Psoas muscle (tissue), 8 donors: ENCODE measurements at regions of chr3 and their contacts with region 1.

Region 1: DNA sequence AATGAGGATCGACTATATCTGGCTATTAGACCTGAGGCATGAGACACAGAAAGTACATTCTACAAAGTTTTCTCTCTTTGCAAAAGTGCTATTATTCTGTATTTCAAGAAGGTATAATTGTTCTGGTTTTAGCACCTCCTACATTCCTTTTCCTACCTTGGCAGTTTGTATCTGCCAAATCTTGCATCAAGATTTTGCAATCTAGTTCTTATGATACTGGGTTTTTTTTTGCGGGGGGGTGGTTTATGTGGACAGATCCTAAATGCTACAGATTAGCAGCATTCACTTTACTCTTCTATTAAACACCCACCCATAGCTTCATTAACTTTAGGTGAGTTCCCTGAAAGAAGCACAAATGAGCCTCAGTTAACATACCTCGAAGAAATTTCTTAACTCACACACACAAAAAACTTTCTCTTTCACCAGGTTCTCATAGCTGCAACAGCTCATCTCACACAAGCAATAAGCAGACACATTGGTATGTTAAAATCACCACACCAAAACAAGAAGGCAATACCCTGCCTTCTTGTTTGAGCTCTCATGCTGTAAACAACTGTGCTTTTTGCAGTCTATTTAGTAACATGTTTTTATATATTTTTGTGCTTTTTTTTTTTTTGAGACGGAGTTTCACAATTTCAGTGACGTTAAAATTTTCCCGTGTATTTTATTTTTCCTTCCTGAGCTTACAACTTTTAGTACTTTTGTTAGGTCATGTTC is 73.0 kb upstream of the VGLL4 start:
- DNase-seq: no peak
- ATAC-seq: no peak
- H3K4me3 ChIP-seq: no peak overlapping the region
- H3K27ac ChIP-seq: peak overlapping the region; percentile 86
- H3K4me1 ChIP-seq: peaks cover 11% of the 10 kb centered on the region
- H3K27me3 ChIP-seq: no peaks in the 10 kb centered on the region
- CTCF ChIP-seq: no peak

Region 2: DNA sequence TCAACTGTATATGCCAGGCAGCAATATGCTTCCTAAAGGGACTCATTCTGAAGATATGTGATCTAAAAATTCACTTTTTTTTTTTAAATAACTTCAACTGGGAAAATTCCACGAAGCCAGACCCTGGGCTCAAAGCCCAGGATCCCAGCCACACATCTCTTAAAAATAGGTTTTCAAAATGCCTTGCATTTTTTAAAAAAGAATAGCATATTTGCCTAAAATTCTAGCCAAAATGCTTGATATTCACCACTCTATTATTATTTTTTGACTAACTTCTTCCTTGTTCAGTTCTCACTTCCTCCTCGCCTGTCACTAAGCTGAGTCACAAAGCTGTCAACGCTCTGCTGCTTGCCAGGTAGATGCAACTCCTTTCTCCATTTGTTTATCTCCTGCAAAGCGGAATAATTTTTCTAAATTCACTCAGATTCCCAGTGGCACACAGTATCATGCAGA is 45.1 kb before region 1 on chr3:
- intact Hi-C with region 1: loop called in 1 of 2 experiments (anchors 5 kb)
- DNase-seq: peak in 1 of 2 donors; percentile 26
- ATAC-seq: peak in 1 of 4 donors; percentile 76
- H3K4me3 ChIP-seq: no peak overlapping the region
- H3K27ac ChIP-seq: no peak overlapping the region
- H3K4me1 ChIP-seq: peaks cover 21% of the 10 kb centered on the region
- H3K27me3 ChIP-seq: no peaks in the 10 kb centered on the region
- CTCF ChIP-seq: no peak

Region 3: DNA sequence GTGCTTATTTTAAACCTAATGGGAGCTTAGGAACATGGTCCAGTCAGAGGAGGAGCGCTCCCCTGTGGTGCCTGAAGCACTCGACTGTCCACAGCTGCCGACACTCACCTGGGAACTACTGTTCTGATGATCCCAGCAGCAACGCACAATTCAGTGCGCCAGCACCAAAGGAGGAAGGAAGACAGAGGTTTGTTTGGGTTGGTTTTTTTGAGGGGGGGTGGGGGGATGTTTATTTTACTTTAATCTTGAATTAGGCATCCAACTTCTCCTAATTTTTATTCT is 24.3 kb before region 1 on chr3:
- intact Hi-C with region 1: loop called in 1 of 2 experiments (anchors 1 kb)
- DNase-seq: no peak
- ATAC-seq: no peak
- H3K4me3 ChIP-seq: no peak overlapping the region
- H3K27ac ChIP-seq: no peak overlapping the region
- H3K4me1 ChIP-seq: no peaks in the 10 kb centered on the region
- H3K27me3 ChIP-seq: no peaks in the 10 kb centered on the region
- CTCF ChIP-seq: no peak

Region 4: GRCh38 chr3:11835028-11835639 is 118.4 kb after region 1 on chr3:
- intact Hi-C with region 1: no loop called
- DNase-seq: no peak
- ATAC-seq: no peak
- H3K4me3 ChIP-seq: no peak overlapping the region
- H3K27ac ChIP-seq: no peak overlapping the region
- H3K4me1 ChIP-seq: no peaks in the 10 kb centered on the region
- H3K27me3 ChIP-seq: no peaks in the 10 kb centered on the region
- CTCF ChIP-seq: peak; percentile 19